Activated CD4-positive, alpha-beta T cell treated with anti-CD3 and anti-CD28 coated beads, Interleukin-2, amount 10 ng/mL, durations not matched to agents 7 days and 5 days (primary cell): ENCODE measurements at regions of chr11 and their contacts with region 1.

Region 1: GRCh38 chr11:10954184-10954583 is 96.3 kb upstream of the ZBED5 start:
- DNase-seq: no peak
- H3K4me3 Mint-ChIP-seq: no peak overlapping the region
- H3K27ac Mint-ChIP-seq: no peak overlapping the region
- H3K4me1 Mint-ChIP-seq: no peaks in the 10 kb centered on the region
- H3K27me3 Mint-ChIP-seq: peaks cover 23% of the 10 kb centered on the region

Region 2: GRCh38 chr11:10943968-10944367 is 10.2 kb before region 1 on chr11:
- CTCF ChIA-PET with region 1: interaction called, 11 read pairs
- POLR2A ChIA-PET with region 1: no interaction called
- DNase-seq: no peak
- H3K4me3 Mint-ChIP-seq: no peak overlapping the region
- H3K27ac Mint-ChIP-seq: no peak overlapping the region
- H3K4me1 Mint-ChIP-seq: no peaks in the 10 kb centered on the region
- H3K27me3 Mint-ChIP-seq: peaks cover 19% of the 10 kb centered on the region